ENCODE measurements at regions of chr12 and their contacts with region 1.

Region 1: DNA sequence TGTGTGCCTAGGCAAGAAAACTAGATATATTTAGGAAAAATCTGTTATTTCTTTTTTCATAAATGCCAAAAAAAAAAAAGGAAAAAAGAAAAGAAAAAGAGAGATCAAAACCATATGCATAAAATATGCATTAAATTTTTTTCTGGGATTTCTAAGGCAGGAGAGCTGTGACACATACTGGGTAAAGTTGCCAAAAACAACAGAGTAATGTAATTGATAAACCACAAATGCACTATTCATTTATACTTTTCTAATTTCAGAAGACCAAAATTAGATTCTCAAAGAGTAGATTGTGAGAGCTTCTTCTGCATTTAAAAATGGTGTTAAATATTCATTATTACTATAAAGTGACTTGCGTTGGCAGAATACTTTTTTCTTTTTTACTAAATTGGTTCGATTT is 673.8 kb upstream of the MGAT4C start:
- DNase-seq: no peak
- ATAC-seq: no peak
- H3K4me3 ChIP-seq: no peak overlapping the region
- H3K27ac ChIP-seq: no peak overlapping the region
- H3K4me1 ChIP-seq: no peaks in the 10 kb centered on the region
- H3K27me3 ChIP-seq: no peaks in the 10 kb centered on the region
- CTCF ChIP-seq: no peak
- POLR2A ChIP-seq: no peak

Region 2: DNA sequence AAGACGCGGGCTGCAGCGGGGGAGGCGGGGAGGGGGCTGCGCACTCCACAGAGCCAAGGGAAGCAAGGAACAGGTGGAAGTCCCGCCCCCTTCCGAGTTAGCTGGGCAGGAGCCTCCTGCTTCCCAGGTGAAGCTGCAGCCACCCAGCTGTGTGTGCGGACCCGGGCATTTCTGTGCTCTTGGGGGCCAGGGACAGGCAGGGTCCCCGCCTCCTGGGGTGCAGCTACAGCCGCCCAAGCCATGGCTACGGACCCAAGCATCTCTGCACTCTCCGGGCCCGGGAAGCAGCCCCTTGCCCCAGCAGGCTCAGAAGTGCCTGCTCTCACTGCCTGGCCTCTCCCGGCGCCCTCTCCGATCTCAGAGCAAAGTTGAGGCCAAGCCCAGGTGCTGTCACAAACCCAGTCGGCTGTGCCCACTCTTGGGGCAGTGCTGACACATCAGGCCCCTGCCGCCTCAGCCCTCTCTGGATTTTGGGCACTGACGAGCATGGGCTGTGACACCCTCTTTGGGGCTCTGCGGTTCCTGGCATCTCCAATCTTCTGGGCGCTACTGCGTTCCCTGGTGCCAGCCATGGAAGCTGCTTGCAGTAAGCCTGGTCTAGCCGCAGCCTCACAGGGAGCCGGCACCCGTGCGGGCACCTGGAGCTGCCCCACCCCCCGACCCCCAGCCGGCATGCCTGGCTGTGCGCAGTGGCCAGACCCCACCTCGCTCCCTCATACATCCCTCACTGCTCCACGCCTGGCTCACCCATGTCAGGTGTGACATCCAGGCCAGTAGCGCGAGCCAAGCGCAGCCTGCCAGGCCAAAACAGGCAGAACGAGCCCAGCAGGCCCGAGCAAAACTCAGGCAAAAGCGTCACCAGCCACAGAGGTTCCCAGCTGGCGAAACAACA is 665.3 kb before region 1 on chr12:
- intact Hi-C with region 1: loop called in 1 of 10 experiments (anchors 10 kb)
- DNase-seq: peak in 3 of 5 donors; percentile 15 to 51 (median 20)
- ATAC-seq: peak in 2 of 4 donors; percentile 52 to 57
- H3K4me3 ChIP-seq: peak overlapping the region in 8 of 12 donors; percentile 3 to 50 (median 20)
- H3K27ac ChIP-seq: no peak overlapping the region
- H3K4me1 ChIP-seq: peaks cover 0 to 8% (median 0%) of the 10 kb centered on the region in 12 donors
- H3K27me3 ChIP-seq: no peaks in the 10 kb centered on the region
- CTCF ChIP-seq: no peak
- POLR2A ChIP-seq: no peak

Region 3: DNA sequence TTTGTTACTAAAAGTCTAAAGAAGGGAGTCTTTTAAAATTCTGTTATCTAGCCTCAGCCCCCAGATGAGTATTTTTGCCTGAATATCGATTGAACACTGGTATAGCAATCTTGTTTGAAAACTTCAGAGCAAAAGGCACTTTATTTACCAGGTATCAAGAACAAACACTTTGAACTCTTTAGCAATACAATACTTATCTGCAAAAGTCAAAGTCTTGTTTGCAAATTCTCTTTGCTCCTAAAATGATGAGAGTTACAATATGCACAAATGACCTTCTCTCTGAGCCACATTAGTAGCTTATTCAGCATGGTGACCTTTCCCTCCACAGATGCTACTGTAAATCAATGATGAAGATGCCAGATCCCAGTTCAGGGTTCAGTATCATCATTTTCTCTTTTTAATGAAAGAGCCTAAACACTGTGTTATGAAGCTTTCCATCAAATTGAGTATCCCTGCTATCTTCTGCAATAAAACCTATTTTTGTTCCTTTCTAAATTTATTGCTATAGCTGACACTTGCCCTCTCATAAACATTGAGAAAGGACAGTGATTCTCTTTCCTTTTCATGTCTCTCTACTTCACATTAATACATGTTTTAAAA is 78.9 kb after region 1 on chr12:
- intact Hi-C with region 1: no loop called
- DNase-seq: no peak
- ATAC-seq: no peak
- H3K4me3 ChIP-seq: no peak overlapping the region
- H3K27ac ChIP-seq: no peak overlapping the region
- H3K4me1 ChIP-seq: no peaks in the 10 kb centered on the region
- H3K27me3 ChIP-seq: no peaks in the 10 kb centered on the region
- CTCF ChIP-seq: no peak
- POLR2A ChIP-seq: no peak